ENCODE measurements at regions of chr22 and their contacts with region 1.

Region 1: DNA sequence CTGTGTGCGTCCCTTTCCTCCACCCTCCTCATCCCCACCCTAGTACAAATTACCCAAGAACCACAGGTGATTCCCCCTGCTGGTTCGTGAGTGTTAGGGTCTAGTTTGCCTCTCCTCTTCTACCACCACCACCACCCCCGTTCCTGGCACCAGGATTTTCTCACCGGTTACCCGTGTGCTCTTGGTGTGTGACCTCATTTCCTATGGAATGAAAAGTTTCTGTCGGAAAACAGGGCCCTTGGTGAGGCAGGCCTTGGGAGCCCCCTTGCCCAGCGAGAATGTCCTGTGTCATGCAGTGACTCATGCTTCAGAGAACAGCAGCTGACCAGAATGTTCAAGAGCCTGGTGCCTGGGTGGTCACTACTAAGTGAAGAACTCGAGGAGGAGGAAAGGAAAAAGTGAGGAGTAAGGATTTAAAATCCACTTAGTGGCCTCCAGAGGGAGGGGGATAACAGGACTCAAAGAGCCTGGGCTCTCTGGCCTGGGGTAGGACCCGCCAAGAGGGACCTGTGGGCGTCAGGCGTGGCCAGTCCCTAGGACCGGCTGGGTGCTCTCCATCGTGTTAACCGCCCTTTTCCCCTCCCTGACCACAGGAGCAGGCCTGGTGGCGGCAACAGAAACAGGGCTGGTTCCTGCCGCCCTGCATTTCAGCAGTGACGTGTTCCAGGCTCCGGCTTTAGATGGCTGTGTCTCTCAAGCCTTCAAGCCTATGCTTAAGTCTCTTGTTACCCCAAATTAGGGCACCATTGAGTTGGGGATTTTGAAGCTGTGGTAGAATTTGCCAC is 30.2 kb downstream of the C22orf31 start:
- DNase-seq: peak; percentile 60 to 90
- H3K4me3 ChIP-seq: peak overlapping the region; percentile 74
- H3K27ac ChIP-seq: peak overlapping the region; percentile 93
- H3K4me1 ChIP-seq: peaks cover 46% of the 10 kb centered on the region
- H3K27me3 ChIP-seq: no peaks in the 10 kb centered on the region
- CTCF ChIP-seq: no peak

Region 2: GRCh38 chr22:28976588-28976987 is 54.8 kb before region 1 on chr22:
- CTCF ChIA-PET with region 1: interaction called, 3 read pairs
- POLR2A ChIA-PET with region 1: no interaction called
- intact Hi-C with region 1: loop called (anchors 2 kb)
- DNase-seq: peak in 1 of 2 experiments; percentile 42
- H3K4me3 ChIP-seq: no peak overlapping the region
- H3K27ac ChIP-seq: no peak overlapping the region
- H3K4me1 ChIP-seq: peaks cover 6% of the 10 kb centered on the region
- H3K27me3 ChIP-seq: no peaks in the 10 kb centered on the region
- CTCF ChIP-seq: no peak

Region 3: DNA sequence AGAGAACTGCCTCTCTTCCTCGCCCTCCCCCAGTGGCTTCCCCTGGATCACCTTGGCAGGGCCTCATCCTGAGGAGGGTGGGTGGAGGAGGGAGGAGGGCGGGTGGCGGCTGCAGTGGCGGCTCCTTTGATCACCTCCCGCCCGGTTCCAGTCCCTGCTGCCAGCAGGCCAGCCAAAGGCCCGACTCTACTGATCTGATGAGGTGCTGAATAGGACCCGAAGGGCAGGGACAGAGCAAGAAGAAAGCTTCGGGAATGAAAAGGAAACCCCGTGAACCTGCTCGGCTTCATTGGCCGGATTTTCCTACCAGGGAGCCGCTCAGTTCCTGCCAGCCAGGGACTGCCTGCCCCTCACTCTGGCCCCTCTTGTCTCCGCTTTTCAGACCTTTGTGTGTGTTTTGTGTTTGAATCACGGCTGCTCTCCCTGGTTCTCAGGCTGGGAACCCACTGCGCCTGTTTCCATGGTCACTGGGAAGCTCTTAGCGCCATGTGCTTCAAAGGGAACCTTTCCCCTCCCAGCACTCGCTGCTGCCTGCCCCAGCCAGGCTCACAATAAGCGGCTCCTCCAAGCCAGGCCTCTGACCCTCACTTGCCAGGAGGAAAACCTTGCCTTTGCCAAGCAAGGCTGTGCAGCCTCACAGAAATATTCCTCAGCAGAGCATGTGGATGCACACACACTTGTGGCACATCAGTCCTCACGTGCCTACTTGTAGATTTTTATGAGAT is 26.6 kb before region 1 on chr22:
- CTCF ChIA-PET with region 1: interaction called, 17 read pairs
- POLR2A ChIA-PET with region 1: no interaction called
- intact Hi-C with region 1: no loop called
- DNase-seq: no peak
- H3K4me3 ChIP-seq: no peak overlapping the region
- H3K27ac ChIP-seq: no peak overlapping the region
- H3K4me1 ChIP-seq: no peaks in the 10 kb centered on the region; the same call in 1 of the 2 replicates
- H3K27me3 ChIP-seq: no peaks in the 10 kb centered on the region
- CTCF ChIP-seq: no peak

Region 4: GRCh38 chr22:29016067-29016938 is 15.1 kb before region 1 on chr22:
- CTCF ChIA-PET with region 1: no interaction called
- POLR2A ChIA-PET with region 1: no interaction called
- intact Hi-C with region 1: no loop called
- DNase-seq: no peak
- H3K4me3 ChIP-seq: no peak overlapping the region
- H3K27ac ChIP-seq: no peak overlapping the region
- H3K4me1 ChIP-seq: no peaks in the 10 kb centered on the region
- H3K27me3 ChIP-seq: no peaks in the 10 kb centered on the region
- CTCF ChIP-seq: no peak

Measured in PC-9 (cell line).